A549 (cell line): ENCODE measurements at regions of chr1 and their contacts with region 1.

Region 1: GRCh38 chr1:67853704-67854103 is 20.4 kb upstream of the GNG12 start:
- DNase-seq: peak; percentile 59 to 83
- ATAC-seq: peak; percentile 76 to 86
- H3K4me3 ChIP-seq: no peak overlapping the region
- H3K27ac ChIP-seq: peak overlapping the region; percentile 35 to 88
- H3K4me1 ChIP-seq: peaks cover 26% of the 10 kb centered on the region
- CTCF ChIP-seq: peak; percentile 71
- EP300 ChIP-seq: no peak
- POLR2A ChIP-seq: no peak
- RAD21 ChIP-seq: peak; percentile 95 to 97

Region 2: DNA sequence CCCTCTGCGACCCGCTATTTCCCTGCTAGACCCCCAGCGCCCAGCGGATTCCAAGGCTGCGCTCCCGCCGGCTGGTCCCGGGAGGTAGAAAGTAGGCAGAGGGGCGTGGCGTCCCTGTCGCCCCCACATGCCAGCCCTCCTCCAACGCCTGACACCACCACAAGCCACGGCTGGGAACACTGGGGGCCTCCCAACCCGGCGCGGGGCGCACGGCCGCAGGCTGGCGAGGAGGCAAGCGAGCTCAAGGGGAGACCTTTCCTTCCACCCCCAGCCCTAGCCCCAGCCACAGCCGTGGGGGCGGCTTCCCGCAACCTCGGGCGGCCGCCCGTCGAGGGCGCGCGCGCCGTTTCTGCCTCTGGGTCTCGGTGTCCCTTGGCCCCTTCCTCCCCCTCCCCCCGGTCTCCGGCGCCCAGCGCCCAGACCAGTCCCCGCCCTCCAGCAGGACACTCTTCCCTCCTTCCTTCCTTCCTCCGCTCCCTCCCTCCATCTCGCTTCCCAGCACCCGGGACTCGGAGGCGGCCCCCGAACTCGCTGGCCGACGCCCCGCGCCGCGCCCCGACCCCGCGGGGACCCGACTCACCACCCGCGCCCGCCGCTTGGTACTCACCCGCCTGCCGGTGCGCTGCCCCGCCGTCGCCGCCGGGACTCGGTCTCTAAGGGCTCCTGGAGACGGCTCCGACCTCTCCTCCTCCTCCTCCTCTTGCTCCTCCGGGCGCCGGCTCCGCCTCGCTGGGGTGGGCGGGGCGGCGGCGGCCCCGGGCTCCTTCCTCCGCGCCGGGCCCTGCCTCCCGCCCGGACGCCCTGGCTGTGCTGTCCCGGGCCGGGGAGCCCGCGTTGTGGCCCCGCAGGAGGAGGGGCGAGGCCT is 20.7 kb before region 1 on chr1 and contains the start of gene GNG12:
- CTCF ChIA-PET with region 1: interaction called, 10 read pairs
- POLR2A ChIA-PET with region 1: no interaction called
- DNase-seq: peak; percentile 63 to 78
- ATAC-seq: peak; percentile 89 to 92
- H3K4me3 ChIP-seq: peak within 1 kb of the TSS; percentile 86
- H3K27ac ChIP-seq: peak within 1 kb of the TSS; percentile 97 to 99
- H3K4me1 ChIP-seq: peaks cover 42% of the 10 kb centered on the region
- CTCF ChIP-seq: no peak
- EP300 ChIP-seq: no peak
- POLR2A ChIP-seq: peak; percentile 16; the same call in 1 of the 2 replicates
- RAD21 ChIP-seq: peak in 1 of 2 experiments; percentile 27; a peak in 2 of 5 replicates
- polyA plus RNA-seq, gene GNG12: 104 and 132 TPM in 2 replicates

Region 3: GRCh38 chr1:67978890-67979516 is 125.3 kb after region 1 on chr1:
- CTCF ChIA-PET with region 1: interaction called, 10 read pairs
- POLR2A ChIA-PET with region 1: no interaction called
- DNase-seq: peak; percentile 51 to 92
- ATAC-seq: peak; percentile 96 to 97
- H3K4me3 ChIP-seq: no peak overlapping the region
- H3K27ac ChIP-seq: peak overlapping the region; percentile 90 to 95
- H3K4me1 ChIP-seq: peaks cover 27% of the 10 kb centered on the region
- CTCF ChIP-seq: no peak
- EP300 ChIP-seq: peak; percentile 93 to 98
- POLR2A ChIP-seq: no peak
- RAD21 ChIP-seq: peak; percentile 30 to 65

Region 4: GRCh38 chr1:68010090-68010489 is 156.4 kb after region 1 on chr1:
- CTCF ChIA-PET with region 1: interaction called, 14 read pairs
- POLR2A ChIA-PET with region 1: no interaction called
- DNase-seq: no peak
- ATAC-seq: 0 out of 6 replicates have a peak, but pooled peaks of 1 of the 2 experiments have one; percentile 35
- H3K4me3 ChIP-seq: no peak overlapping the region
- H3K27ac ChIP-seq: peak overlapping the region in 1 of 2 experiments; percentile 58; a peak in 2 of 6 replicates
- H3K4me1 ChIP-seq: peaks cover 14% of the 10 kb centered on the region; the same call in 2 of the 3 replicates
- CTCF ChIP-seq: peak; percentile 38; the same call in 1 of the 3 replicates
- EP300 ChIP-seq: no peak
- POLR2A ChIP-seq: no peak
- RAD21 ChIP-seq: peak; percentile 39 to 57; a peak in 3 of 5 replicates

Region 5: DNA sequence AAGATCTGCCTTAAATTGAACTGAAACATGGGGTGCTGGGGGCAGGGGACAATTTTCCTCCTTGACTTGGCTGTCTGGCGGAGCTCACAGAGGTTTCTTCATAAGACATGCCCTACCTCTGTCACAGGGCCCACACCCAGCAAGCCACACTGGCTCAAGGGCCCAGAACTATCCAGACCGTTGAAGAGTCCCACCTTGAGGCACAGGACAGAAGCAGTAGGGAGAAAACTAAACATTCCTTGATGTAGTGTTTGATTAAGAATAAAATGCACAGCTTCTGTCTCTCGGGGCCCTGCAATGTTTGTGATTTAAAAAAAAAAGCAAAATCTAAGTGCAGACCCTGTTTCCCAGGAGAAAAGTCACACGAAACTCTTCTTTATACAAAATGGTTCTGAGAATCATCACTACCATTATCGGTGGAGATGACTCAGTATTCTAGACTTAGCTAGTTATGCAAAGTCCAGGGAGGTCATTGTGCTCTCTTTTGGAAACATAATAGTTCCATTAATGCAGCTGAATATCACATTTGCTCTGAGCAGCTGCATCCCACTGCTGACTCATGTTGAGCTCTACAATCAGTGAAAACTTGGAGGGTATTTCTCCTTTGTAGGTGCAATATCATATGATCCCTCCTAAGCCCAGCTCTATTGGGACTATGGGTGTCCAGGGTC is 250.3 kb after region 1 on chr1:
- CTCF ChIA-PET with region 1: interaction called, 177 read pairs
- POLR2A ChIA-PET with region 1: no interaction called
- DNase-seq: no peak
- ATAC-seq: no peak
- H3K4me3 ChIP-seq: no peak overlapping the region
- H3K27ac ChIP-seq: peak overlapping the region in 1 of 2 experiments; percentile 74; a peak in 3 of 6 replicates
- H3K4me1 ChIP-seq: peaks cover 10% of the 10 kb centered on the region; the same call in 2 of the 3 replicates
- CTCF ChIP-seq: no peak
- EP300 ChIP-seq: no peak
- POLR2A ChIP-seq: no peak
- RAD21 ChIP-seq: no peak